ENCODE measurements at regions of chr5 and their contacts with region 1.

Region 1: DNA sequence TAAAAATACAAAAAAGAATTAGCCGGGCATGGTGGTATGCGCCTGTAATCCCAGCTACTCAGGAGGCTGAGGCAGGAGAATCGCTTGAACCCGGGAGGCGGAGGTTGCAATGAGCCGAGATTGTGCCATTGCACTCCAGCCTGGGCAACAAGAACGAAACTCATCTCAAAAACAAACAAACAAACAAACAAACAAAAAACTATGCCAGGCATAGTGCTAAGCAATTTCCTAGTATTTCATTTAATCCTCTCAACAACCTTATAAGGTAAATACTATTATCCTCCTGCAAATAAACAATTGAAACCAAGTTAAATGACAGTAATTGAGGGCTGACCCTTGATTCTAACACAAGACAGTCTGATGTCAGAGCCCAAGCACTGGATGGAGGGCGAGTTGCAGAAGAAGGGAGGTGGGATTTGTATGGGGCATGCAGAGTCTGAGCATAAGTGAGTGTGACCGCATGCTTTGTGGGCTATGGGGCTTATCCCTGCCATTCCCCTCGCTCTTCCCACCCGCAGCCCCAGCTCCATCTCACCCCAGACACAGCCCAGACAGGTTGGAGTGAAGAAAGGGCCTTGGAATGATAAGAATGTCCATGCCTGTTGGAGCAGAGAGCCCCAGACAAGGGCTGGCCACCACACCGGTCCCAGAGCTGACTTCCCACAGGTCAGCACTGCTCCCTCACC is 24.3 kb upstream of the RPS14 start:
- DNase-seq: no peak
- H3K4me3 ChIP-seq: no peak overlapping the region
- H3K27me3 ChIP-seq: no peaks in the 10 kb centered on the region
- CTCF ChIP-seq: peak; percentile 19; the same call in 1 of the 2 replicates

Region 2: DNA sequence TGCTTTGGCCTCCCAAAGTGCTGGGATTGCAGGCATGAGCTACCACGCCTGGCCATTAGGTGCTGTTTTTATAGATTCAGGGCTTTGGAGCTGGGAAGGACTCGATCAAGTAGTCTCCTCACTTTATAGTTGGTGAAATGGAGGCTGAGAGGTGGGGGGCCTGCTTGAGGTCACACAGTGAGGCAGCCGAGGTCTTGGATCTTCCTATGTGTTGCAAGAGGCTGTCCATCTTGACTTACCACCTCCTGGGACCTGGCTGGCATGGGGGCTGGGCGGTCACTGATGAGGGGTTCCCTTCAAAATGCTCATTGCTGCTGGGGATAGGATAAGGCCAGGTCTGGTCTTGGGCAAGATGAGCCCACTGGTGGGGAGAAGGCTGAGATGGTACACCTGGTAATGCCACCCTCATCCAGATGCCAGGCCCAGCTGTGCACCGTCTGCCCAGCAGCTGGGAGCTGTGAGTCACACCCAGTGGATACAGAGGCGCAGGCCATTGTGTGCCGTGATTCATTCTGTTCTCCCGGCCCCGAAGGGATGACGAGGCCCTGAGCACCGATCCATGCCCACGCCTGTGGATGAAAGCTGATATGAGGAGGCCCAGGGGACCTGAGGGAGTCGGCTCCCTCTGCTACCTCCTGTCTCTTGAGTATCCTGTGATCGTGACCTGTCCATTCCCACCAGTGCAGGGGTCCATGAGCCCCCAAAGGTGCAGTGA is 23.6 kb after region 1 on chr5:
- CTCF ChIA-PET with region 1: interaction called, 3 read pairs
- POLR2A ChIA-PET with region 1: interaction called, 40 read pairs
- DNase-seq: peak; percentile 66
- H3K4me3 ChIP-seq: no peak overlapping the region
- H3K27me3 ChIP-seq: no peaks in the 10 kb centered on the region
- CTCF ChIP-seq: no peak

Measured in BJ (cell line).